Activated CD8-positive, alpha-beta memory T cell treated with anti-CD3 and anti-CD28 coated beads, Interleukin-2, amount 10 ng/mL, durations not matched to agents 7 days and 5 days (primary cell): ENCODE measurements at regions of chr1 and their contacts with region 1.

Region 1: DNA sequence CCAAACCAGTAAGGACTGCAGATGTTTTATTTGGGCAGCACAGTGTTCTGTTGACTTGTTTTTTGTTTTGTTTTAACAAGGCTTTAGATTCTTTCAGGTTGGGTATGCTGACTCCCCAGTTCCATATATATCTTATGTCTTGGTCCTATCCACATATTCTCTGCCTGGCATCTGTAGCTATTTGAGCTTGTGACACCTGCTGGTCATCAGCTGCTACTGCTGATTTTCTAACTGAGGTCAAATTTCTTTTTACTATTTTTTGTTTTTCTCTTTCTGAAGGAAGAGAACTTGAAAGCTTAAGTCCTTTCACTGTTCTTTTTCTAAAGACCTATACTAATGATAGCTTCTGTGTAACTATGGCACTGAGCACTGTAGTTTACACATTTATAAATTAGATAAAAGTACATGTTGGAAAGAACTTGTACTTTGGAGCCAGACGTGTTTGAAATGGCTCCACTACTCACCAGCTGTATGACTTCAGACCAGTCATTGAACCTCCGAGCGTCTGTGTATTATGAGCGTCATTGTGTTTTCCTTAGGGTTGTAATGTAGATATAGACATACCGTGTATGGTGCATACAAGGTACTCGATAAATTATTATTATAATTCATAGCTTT is 109.4 kb downstream of the NRDC start:
- DNase-seq: no peak
- ATAC-seq: peak; percentile 63
- H3K4me3 Mint-ChIP-seq: no peak overlapping the region
- H3K27ac Mint-ChIP-seq: no peak overlapping the region
- H3K4me1 Mint-ChIP-seq: peaks cover 2% of the 10 kb centered on the region
- H3K27me3 Mint-ChIP-seq: no peaks in the 10 kb centered on the region

Region 2: GRCh38 chr1:51627678-51628077 is 141.4 kb before region 1 on chr1:
- CTCF ChIA-PET with region 1: interaction called, 12 read pairs
- DNase-seq: no peak
- ATAC-seq: no peak
- H3K4me3 Mint-ChIP-seq: no peak overlapping the region
- H3K27ac Mint-ChIP-seq: no peak overlapping the region
- H3K4me1 Mint-ChIP-seq: peaks cover 13% of the 10 kb centered on the region
- H3K27me3 Mint-ChIP-seq: no peaks in the 10 kb centered on the region

Region 3: DNA sequence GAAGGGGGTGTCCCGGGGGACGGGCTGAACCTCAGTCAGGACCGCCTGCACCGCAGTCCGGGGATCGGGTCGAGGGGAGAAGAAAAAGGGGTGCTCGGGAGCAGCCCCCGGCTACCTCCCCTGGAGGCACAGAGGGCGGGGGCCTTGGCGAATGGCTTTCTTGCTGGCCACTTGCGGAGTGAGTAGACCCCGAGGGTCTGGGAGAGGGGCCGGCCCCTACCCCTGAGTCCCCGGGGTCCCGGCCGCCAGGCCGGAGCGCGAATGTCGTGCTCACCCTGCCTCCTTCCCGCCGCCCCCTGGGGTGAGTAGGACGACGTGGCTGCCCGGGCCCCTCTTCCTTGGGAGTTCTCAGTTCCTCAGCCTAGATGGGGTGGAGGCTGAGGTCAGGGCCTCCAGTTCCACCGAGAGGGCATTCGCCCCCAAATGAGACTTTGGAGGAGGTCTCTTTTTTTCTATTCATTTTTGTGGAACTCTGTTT is 39.2 kb before region 1 on chr1:
- CTCF ChIA-PET with region 1: interaction called, 14 read pairs
- DNase-seq: no peak
- ATAC-seq: peak; percentile 29
- H3K4me3 Mint-ChIP-seq: peak overlapping the region; percentile 82
- H3K27ac Mint-ChIP-seq: peak overlapping the region; percentile 89
- H3K4me1 Mint-ChIP-seq: peaks cover 36% of the 10 kb centered on the region
- H3K27me3 Mint-ChIP-seq: no peaks in the 10 kb centered on the region